Sciatic nerve (tissue), 2 donors: ENCODE measurements at regions of chr1 and their contacts with region 1.

Region 1: DNA sequence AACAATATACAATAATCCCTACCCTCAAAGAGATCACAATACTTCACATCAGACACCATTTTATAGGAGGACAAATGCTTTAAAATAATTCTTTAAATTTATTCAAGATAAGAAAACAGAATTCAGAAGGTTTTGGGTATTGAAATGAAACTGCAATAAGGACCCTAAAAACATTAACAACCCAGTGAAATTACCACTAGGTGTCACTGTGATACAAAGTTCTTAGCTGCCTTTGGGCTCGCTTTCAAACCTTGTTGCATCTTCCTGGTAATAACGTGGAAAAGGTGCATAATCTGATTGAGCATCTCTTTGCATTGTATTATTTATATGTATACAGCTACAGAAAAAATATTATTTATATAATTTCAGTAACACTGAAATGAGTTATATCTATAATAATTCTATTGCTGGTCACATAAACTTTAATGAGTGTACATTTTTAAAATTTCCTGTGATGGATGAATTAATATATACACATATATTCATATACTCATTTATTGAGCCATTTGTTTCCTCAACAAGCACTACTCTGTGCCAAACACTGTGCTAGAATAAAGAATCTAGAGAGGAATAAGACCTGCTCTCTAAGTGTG is 185.2 kb downstream of the FAF1 start:
- DNase-seq: no peak
- ATAC-seq: no peak

Region 2: DNA sequence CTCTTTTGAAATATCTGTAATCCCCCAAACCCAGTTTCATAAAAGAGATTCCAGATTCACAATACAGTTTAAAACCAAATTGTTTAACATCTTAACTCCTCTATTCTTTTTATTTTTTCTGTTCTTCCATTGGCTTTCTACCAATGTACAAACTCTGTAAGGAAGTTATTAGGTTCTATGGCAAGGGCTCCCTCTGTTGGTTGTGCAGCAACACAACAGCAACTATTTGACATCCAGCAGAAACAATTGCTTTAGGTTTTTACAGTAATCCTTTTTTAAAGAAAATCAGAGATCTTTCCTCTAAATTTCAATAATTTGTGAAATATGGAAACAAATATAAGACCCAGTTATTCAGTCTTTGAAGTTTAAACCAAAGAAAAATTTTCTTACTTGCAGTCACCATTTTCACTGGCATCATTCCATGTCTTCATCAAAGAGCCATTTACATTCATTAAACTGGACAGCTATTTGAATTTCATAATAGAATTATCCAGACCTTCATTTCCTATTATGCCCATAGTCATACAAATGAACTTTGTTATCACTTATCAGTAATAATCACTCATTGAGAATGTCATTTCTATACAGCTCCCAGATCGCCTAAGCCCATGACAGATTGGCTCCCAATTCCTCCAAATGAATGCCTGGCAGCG is 414.7 kb after region 1 on chr1:
- intact Hi-C with region 1: loop called (anchors 10 kb)
- DNase-seq: no peak
- ATAC-seq: no peak

Region 3: DNA sequence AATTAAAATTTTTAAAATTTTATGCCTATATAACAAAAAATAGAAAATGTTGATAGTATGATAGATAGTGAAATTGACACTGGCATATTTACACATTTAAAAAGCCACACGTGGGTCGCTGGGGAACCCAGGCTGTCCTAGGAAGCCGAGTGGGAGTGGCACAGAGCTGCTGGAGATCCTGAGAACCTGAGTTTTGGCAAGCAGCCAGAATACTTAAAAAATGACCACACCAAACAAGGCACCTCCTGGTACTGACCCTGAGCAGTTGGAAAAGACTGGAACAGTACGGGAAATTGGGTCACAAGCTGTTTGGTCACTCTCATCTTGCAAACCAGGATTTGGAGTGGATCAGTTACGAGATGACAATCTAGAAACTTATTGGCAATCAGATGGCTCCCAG is 1478.5 kb after region 1 on chr1:
- intact Hi-C with region 1: loop called (anchors 10 kb)
- DNase-seq: no peak
- ATAC-seq: no peak